ENCODE measurements at regions of chr9 and their contacts with region 1.

Region 1: GRCh38 chr9:114738581-114739316 is 56.8 kb upstream of the TEX48 start:
- DNase-seq: peak; percentile 80
- ATAC-seq: peak; percentile 70
- H3K4me3 Mint-ChIP-seq: no peak overlapping the region
- H3K27ac Mint-ChIP-seq: peak overlapping the region; percentile 84
- H3K4me1 Mint-ChIP-seq: peaks cover 56% of the 10 kb centered on the region
- H3K27me3 Mint-ChIP-seq: no peaks in the 10 kb centered on the region

Region 2: DNA sequence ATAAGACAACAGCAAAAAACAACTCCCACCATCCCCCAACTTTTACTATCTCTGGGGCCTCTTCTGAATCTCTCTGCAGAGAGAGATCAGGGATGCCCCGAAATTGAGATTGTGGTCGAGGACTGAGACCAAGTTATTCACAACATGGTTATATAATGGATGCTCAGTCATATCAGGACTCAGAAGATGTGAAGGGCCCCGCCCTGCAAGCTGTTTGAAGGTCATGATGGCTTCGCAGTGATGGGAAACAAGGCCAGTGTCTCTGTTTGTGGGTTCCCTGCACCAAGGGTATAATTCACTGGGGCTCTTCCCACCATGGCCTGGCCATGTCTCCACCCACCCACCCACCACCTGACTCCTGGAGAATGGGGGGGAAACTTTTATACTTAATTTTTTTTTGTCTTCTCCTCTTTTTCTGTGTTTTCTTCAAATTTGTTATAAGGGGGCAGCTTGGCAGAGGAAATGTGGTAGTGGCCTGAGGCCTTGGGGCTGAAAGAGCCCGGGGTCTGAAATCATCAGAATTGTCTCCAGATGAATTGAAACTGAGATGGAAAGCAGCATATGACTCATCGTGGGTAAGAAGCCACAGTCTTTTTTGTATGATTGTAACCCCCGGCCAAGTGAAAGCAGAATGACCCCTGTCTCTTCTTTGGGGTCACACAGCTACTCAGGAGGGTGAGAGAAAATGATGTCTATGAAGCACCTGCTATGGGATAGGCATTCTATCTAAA is 41.8 kb before region 1 on chr9:
- CTCF ChIA-PET with region 1: interaction called, 9 read pairs
- POLR2A ChIA-PET with region 1: interaction called, 7 read pairs
- intact Hi-C with region 1: loop called in 1 of 2 experiments (anchors 1 kb)
- DNase-seq: peak; percentile 86
- ATAC-seq: peak; percentile 49
- H3K4me3 Mint-ChIP-seq: peak overlapping the region; percentile 28
- H3K27ac Mint-ChIP-seq: peak overlapping the region; percentile 89
- H3K4me1 Mint-ChIP-seq: peaks cover 89% of the 10 kb centered on the region
- H3K27me3 Mint-ChIP-seq: no peaks in the 10 kb centered on the region

Region 3: GRCh38 chr9:114906908-114907571 is 168.3 kb after region 1 on chr9:
- CTCF ChIA-PET with region 1: interaction called, 18 read pairs
- POLR2A ChIA-PET with region 1: no interaction called
- intact Hi-C with region 1: loop called (anchors 1 kb)
- DNase-seq: peak; percentile 49
- ATAC-seq: peak; percentile 23
- H3K4me3 Mint-ChIP-seq: no peak overlapping the region
- H3K27ac Mint-ChIP-seq: peak overlapping the region; percentile 86
- H3K4me1 Mint-ChIP-seq: peaks cover 58% of the 10 kb centered on the region
- H3K27me3 Mint-ChIP-seq: no peaks in the 10 kb centered on the region

Region 4: GRCh38 chr9:115524453-115525059 is 785.8 kb after region 1 on chr9:
- CTCF ChIA-PET with region 1: no interaction called
- POLR2A ChIA-PET with region 1: no interaction called
- intact Hi-C with region 1: loop called in 1 of 2 experiments (anchors 10 kb)
- DNase-seq: peak; percentile 16
- ATAC-seq: no peak
- H3K4me3 Mint-ChIP-seq: no peak overlapping the region
- H3K27ac Mint-ChIP-seq: no peak overlapping the region
- H3K4me1 Mint-ChIP-seq: no peaks in the 10 kb centered on the region
- H3K27me3 Mint-ChIP-seq: peaks cover 28% of the 10 kb centered on the region